ENCODE measurements at regions of chr1 and their contacts with region 1.

Region 1: GRCh38 chr1:161177112-161177935 is at the start of gene B4GALT3:
- DNase-seq: peak; percentile 91
- H3K4me3 Mint-ChIP-seq: peak within 1 kb of the TSS; percentile 98
- H3K27ac Mint-ChIP-seq: peak within 1 kb of the TSS; percentile 100
- H3K4me1 Mint-ChIP-seq: peaks cover 67% of the 10 kb centered on the region
- H3K27me3 Mint-ChIP-seq: no peaks in the 10 kb centered on the region
- total RNA-seq, gene B4GALT3: 66.4 and 68.2 TPM in 2 replicates

Region 2: GRCh38 chr1:160768295-160768657 is 409.0 kb before region 1 on chr1:
- intact Hi-C with region 1: no loop called
- DNase-seq: peak; percentile 79
- H3K4me3 Mint-ChIP-seq: peak overlapping the region; percentile 83
- H3K27ac Mint-ChIP-seq: peak overlapping the region; percentile 89
- H3K4me1 Mint-ChIP-seq: peaks cover 49% of the 10 kb centered on the region
- H3K27me3 Mint-ChIP-seq: no peaks in the 10 kb centered on the region

Region 3: DNA sequence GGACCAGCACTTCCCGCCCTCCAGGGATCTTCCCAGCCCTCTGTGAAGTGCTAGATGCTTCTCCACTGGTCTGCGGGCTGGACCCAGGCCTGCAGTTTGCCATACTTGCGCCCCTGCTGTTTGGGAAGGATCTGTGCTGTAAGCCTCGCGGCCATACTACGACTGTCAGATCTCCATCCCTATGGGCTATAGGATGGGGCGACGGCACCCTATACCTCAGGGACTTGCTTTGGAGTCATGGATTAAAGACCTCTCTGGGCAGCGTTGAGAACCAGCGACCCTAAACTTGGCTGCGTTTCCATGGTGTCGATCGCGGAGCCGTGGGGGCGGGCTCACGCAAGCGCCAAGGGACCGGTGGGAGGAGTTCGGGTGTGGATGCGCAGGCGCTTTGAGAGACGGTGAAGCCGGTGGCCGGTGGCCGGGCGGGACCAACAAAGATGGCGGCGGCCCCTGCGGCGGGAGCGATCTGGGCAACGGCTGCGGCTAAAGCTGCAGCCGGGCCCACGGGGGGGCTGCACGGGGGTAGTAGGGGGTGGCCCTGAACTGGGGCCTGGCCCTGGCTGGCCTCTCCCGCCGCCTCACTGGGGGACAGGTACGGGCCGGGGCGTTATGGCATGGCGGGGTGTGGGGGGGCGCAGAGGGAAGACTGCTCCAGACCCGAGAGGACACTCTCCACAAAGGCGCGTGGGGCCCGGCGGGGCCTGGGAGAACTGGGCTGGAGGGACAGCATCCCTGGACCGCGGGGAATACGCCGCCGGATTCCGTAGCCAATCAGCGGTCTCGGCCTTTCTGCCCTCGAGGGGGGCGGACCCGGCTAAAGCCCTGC is 18.0 kb before region 1 on chr1 and contains the start of gene USP21:
- intact Hi-C with region 1: loop called (anchors 2 kb)
- DNase-seq: peak; percentile 91
- H3K4me3 Mint-ChIP-seq: peak within 1 kb of the TSS; percentile 88
- H3K27ac Mint-ChIP-seq: peak within 1 kb of the TSS; percentile 86
- H3K4me1 Mint-ChIP-seq: peaks cover 64% of the 10 kb centered on the region
- H3K27me3 Mint-ChIP-seq: no peaks in the 10 kb centered on the region
- total RNA-seq, gene USP21: 32.9 and 38.2 TPM in 2 replicates

Region 4: DNA sequence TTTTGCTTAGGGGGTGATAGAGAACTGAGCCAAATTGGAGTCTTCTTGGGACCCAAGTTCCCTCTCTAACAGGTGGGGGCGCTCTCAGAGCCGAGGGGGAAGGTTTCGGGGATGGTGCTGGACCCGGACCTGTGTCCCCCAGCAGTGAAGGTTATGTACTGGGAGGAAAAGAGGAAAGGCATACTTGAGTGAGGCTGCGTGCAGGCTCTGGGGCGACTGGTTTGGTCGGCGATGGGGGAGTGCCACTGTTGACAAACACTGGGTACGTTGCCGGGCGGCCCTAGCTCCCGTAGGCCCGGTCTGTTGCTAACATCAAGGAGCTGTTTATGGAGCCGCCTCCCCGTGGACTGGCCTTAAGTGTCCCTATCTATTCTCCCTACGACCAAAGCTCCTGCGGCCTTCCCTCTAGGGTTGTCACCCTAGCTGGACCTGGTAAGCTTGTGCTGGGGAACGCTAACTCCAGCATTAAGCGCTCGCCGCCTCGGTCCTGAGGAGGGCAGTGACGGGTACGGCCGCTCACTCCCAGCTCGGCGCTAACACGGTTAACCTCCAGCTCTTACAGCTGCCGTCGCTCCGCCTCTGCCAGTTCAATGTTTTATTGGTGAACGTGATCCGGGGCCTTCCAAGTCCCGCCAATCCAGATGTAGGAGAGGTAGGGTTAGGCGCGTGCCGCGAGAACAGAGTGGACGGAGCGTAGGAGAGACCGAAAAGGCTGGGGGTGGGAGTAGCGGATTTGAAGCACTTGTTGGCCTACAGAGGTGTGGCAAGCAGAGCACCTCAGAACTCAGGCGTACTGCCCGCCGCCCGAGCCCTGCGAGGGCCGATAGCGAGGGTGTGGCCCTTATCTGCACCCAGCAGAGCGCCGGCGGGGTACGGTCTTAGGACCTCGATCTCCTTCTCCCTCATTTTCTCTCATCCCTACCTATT is 11.3 kb before region 1 on chr1 and contains the start of gene PPOX:
- intact Hi-C with region 1: loop called (anchors 1 kb)
- DNase-seq: peak; percentile 95
- H3K4me3 Mint-ChIP-seq: peak within 1 kb of the TSS; percentile 87
- H3K27ac Mint-ChIP-seq: peak within 1 kb of the TSS; percentile 99
- H3K4me1 Mint-ChIP-seq: peaks cover 61% of the 10 kb centered on the region
- H3K27me3 Mint-ChIP-seq: no peaks in the 10 kb centered on the region
- total RNA-seq, gene PPOX: 25.1 and 26.0 TPM in 2 replicates

Region 5: GRCh38 chr1:161192476-161193465 is 15.4 kb after region 1 on chr1:
- intact Hi-C with region 1: loop called (anchors 1 kb)
- DNase-seq: peak; percentile 63
- H3K4me3 Mint-ChIP-seq: no peak overlapping the region
- H3K27ac Mint-ChIP-seq: peak overlapping the region; percentile 67
- H3K4me1 Mint-ChIP-seq: peaks cover 53% of the 10 kb centered on the region
- H3K27me3 Mint-ChIP-seq: no peaks in the 10 kb centered on the region

Measured in activated T-helper 1 cell treated with anti-CD3 and anti-CD28 coated beads, Interleukin-12 subunit alpha, Interleukin-12 subunit beta, Interleukin-2, Interleukin-4 antibody, amounts not matched to agents 30 ng/mL and 10 ng/mL and 1 ng/mL, durations not matched to agents 14 hours and 24 hours and 36 hours (primary cell).